ENCODE measurements at regions of chr7 and their contacts with region 1.

Region 1: DNA sequence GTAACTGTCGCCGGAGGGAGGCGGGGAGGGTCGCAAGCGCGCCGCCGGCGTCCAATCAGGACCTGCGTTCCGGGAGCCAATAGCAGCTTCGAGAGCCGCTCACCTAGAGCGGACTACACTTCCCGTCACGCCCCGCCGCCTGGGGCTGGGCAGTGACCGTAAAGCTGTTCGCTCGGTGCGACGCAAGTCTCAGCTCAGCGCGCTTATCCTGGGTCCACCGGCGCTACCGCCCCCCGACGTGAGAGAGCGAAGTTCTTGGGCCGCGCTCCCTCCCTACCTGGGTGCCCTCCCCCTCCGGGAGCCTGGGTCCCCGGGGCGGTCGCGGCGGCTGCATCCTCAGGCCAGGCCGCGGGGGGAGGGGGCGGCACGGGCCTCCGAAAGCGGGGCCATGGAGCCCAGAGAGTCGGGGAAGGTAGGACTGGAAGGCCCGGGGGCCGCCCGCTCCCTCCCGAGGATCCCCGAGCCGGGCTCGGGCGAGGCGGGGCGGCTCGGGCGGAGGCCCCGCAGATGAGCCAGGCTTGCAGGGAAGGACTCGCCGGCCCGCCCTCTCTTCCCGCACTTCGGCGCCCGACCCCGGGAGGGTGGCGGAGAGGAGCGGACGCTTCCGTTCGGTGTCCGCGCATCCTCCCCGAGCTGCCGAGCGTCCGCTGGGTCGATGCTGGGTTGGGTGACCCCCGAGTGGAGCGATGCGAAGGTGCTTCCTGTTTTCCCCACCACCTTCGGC is at the start of gene ZNF862:
- DNase-seq: peak; percentile 90 to 98
- ATAC-seq: peak; percentile 96 to 100 (median 97)
- H3K4me3 ChIP-seq: peak within 1 kb of the TSS; percentile 72
- H3K4me3 Mint-ChIP-seq: peak within 1 kb of the TSS; percentile 86
- H3K27ac ChIP-seq: peak within 1 kb of the TSS; percentile 54
- H3K27ac Mint-ChIP-seq: peak within 1 kb of the TSS; percentile 76 to 84
- H3K4me1 ChIP-seq: peaks cover 18% of the 10 kb centered on the region
- H3K4me1 Mint-ChIP-seq: peaks cover 20 to 22% of the 10 kb centered on the region in 2 donors
- H3K27me3 ChIP-seq: no peaks in the 10 kb centered on the region
- H3K27me3 Mint-ChIP-seq: peaks cover 0 to 11% of the 10 kb centered on the region in 2 donors
- CTCF ChIP-seq: no peak
- total RNA-seq, gene ZNF862: 21.4 to 28.9 (median 21.7) TPM

Region 2: GRCh38 chr7:149873074-149873969 is 34.9 kb after region 1 on chr7 and contains the start of gene ATP6V0E2:
- intact Hi-C with region 1: loop called (anchors 5 kb)
- DNase-seq: peak; percentile 86 to 95
- ATAC-seq: peak; percentile 87 to 89 (median 88)
- H3K4me3 ChIP-seq: peak within 1 kb of the TSS; percentile 48
- H3K4me3 Mint-ChIP-seq: peak within 1 kb of the TSS; percentile 92
- H3K27ac ChIP-seq: peak within 1 kb of the TSS; percentile 23
- H3K27ac Mint-ChIP-seq: peak within 1 kb of the TSS; percentile 19 to 82
- H3K4me1 ChIP-seq: peaks cover 55% of the 10 kb centered on the region
- H3K4me1 Mint-ChIP-seq: peaks cover 50 to 59% of the 10 kb centered on the region in 2 donors
- H3K27me3 ChIP-seq: no peaks in the 10 kb centered on the region
- H3K27me3 Mint-ChIP-seq: no peaks in the 10 kb centered on the region
- CTCF ChIP-seq: no peak
- total RNA-seq, gene ATP6V0E2: 23.2 to 39.4 (median 34.9) TPM

Measured in natural killer cell (primary cell).